ENCODE measurements at regions of chr12 and their contacts with region 1.

Region 1: GRCh38 chr12:121110211-121110940 is 22.3 kb upstream of the P2RX7 start:
- DNase-seq: peak; percentile 40
- H3K4me3 Mint-ChIP-seq: no peak overlapping the region
- H3K27ac Mint-ChIP-seq: peak overlapping the region; percentile 21
- H3K4me1 Mint-ChIP-seq: peaks cover 8% of the 10 kb centered on the region
- H3K27me3 Mint-ChIP-seq: peaks cover 4% of the 10 kb centered on the region

Region 2: GRCh38 chr12:120649442-120650232 is 460.7 kb before region 1 on chr12:
- intact Hi-C with region 1: loop called (anchors 5 kb)
- DNase-seq: no peak
- H3K4me3 Mint-ChIP-seq: no peak overlapping the region
- H3K27ac Mint-ChIP-seq: no peak overlapping the region
- H3K4me1 Mint-ChIP-seq: peaks cover 15% of the 10 kb centered on the region
- H3K27me3 Mint-ChIP-seq: peaks cover 54% of the 10 kb centered on the region

Region 3: GRCh38 chr12:120797677-120798642 is 312.4 kb before region 1 on chr12:
- intact Hi-C with region 1: loop called (anchors 10 kb)
- DNase-seq: no peak
- H3K4me3 Mint-ChIP-seq: no peak overlapping the region
- H3K27ac Mint-ChIP-seq: peak overlapping the region; percentile 42
- H3K4me1 Mint-ChIP-seq: peaks cover 45% of the 10 kb centered on the region
- H3K27me3 Mint-ChIP-seq: no peaks in the 10 kb centered on the region

Region 4: DNA sequence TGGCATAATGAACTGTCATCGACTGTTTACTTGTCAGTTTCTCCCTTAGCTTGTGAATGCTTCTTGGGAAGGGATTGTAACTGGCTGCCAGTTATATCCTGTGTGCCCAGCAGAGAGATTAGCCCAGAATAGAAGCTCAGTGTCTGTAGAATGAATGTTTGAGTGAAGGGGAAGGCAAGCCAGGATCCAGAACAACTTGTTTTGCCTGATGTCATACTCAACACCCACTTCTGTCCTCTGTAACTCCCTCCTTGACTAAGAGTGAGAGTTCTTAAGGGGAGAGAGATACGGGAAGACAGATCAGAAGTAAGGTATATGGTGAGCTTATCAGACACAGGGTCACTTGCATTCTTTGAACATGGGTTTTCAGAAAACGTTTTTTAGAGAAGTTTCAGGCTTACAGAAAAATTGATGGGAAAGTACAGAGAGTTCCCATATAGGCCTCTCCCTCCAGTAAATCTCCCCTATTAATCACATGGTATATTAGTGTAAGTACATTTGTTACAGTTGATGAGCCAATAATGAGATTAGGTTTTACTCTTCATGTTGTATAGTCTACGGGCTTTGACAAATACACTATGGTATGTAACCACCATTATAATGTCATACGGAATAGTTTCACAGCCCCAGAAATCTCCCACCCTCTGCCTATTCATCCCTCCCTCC is 200.6 kb before region 1 on chr12:
- intact Hi-C with region 1: no loop called
- DNase-seq: no peak
- H3K4me3 Mint-ChIP-seq: no peak overlapping the region
- H3K27ac Mint-ChIP-seq: no peak overlapping the region
- H3K4me1 Mint-ChIP-seq: no peaks in the 10 kb centered on the region
- H3K27me3 Mint-ChIP-seq: peaks cover 13% of the 10 kb centered on the region

Region 5: GRCh38 chr12:120944645-120945231 is 165.6 kb before region 1 on chr12:
- intact Hi-C with region 1: loop called (anchors 1 kb)
- DNase-seq: peak; percentile 46
- H3K4me3 Mint-ChIP-seq: no peak overlapping the region
- H3K27ac Mint-ChIP-seq: no peak overlapping the region
- H3K4me1 Mint-ChIP-seq: peaks cover 5% of the 10 kb centered on the region
- H3K27me3 Mint-ChIP-seq: peaks cover 4% of the 10 kb centered on the region

Region 6: GRCh38 chr12:121005346-121005815 is 105.0 kb before region 1 on chr12:
- intact Hi-C with region 1: loop called (anchors 1 kb)
- DNase-seq: peak; percentile 32
- H3K4me3 Mint-ChIP-seq: no peak overlapping the region
- H3K27ac Mint-ChIP-seq: no peak overlapping the region
- H3K4me1 Mint-ChIP-seq: peaks cover 4% of the 10 kb centered on the region
- H3K27me3 Mint-ChIP-seq: no peaks in the 10 kb centered on the region

Region 7: GRCh38 chr12:121212875-121213274 is 102.5 kb after region 1 on chr12:
- intact Hi-C with region 1: no loop called
- DNase-seq: no peak
- H3K4me3 Mint-ChIP-seq: peak overlapping the region; percentile 45
- H3K27ac Mint-ChIP-seq: no peak overlapping the region
- H3K4me1 Mint-ChIP-seq: peaks cover 42% of the 10 kb centered on the region
- H3K27me3 Mint-ChIP-seq: no peaks in the 10 kb centered on the region

Region 8: GRCh38 chr12:121223292-121224285 is 113.2 kb after region 1 on chr12:
- intact Hi-C with region 1: loop called (anchors 1 kb)
- DNase-seq: peak; percentile 36
- H3K4me3 Mint-ChIP-seq: peak overlapping the region; percentile 37
- H3K27ac Mint-ChIP-seq: peak overlapping the region; percentile 89
- H3K4me1 Mint-ChIP-seq: peaks cover 44% of the 10 kb centered on the region
- H3K27me3 Mint-ChIP-seq: no peaks in the 10 kb centered on the region

Measured in activated T-helper 1 cell treated with anti-CD3 and anti-CD28 coated beads, Interleukin-12 subunit alpha, Interleukin-12 subunit beta, Interleukin-2, Interleukin-4 antibody, amounts not matched to agents 30 ng/mL and 10 ng/mL and 1 ng/mL, durations not matched to agents 14 hours and 24 hours and 36 hours (primary cell).